Panc1 (cell line): ENCODE measurements at regions of chr6 and their contacts with region 1.

Region 1: DNA sequence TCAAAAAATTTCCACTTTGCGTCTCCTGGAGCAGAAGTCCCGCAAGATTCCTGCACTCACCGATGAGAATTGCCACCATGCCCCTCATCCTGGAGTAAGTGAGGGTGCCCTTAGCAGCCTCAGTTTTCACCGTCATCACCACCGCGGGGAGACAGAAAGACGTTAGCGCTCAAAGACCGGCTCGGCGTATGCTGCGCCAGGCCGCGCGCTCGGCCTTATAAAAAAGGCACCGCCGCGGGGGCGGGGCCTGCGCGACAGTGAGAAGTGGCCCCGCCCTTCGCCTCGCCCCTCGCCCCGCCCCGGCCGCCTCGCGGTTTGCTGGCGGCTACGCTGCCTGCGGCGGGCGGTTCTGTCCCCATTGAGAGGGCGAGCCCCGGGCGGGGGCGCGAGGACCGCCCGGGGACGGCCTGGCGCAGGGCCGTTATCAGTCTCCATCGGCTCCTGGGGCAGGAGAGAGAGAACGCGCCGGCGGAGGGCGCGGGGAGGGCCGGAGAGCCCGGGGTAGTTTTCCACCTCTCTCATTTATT is 122.3 kb upstream of the SLC2A12 start:
- DNase-seq: peak; percentile 59
- ATAC-seq: peak; percentile 81
- H3K4me3 ChIP-seq: peak overlapping the region; percentile 61 to 69
- H3K27ac ChIP-seq: peak overlapping the region; percentile 68
- H3K4me1 ChIP-seq: peaks cover 16% of the 10 kb centered on the region
- H3K27me3 ChIP-seq: no peaks in the 10 kb centered on the region; the same call in 1 of the 2 replicates
- CTCF ChIP-seq: no peak

Region 2: DNA sequence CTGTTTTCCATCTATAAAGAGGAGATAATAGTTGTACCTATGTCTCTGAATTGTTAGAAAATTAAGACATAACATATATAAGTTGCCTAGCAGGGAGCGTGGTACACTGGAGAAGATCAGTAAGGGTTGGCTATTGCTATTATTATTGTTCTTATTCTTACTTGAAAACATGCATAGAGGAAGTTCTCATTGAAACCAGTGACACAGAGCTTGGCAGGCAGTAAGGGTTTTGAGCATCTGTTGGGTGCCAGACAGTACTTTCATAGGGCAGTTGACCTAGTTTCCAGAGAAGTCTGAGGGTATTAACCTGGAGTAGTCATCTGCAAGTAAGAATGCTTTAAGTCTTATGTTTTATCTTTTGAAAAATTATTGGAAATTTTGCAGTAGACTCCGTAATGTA is 156.5 kb after region 1 on chr6:
- CTCF ChIA-PET with region 1: no interaction called
- POLR2A ChIA-PET with region 1: no interaction called
- in situ Hi-C with region 1: no loop called
- intact Hi-C with region 1: no loop called
- DNase-seq: no peak
- ATAC-seq: no peak
- H3K4me3 ChIP-seq: no peak overlapping the region
- H3K27ac ChIP-seq: no peak overlapping the region
- H3K4me1 ChIP-seq: no peaks in the 10 kb centered on the region
- H3K27me3 ChIP-seq: no peaks in the 10 kb centered on the region
- CTCF ChIP-seq: no peak

Region 3: DNA sequence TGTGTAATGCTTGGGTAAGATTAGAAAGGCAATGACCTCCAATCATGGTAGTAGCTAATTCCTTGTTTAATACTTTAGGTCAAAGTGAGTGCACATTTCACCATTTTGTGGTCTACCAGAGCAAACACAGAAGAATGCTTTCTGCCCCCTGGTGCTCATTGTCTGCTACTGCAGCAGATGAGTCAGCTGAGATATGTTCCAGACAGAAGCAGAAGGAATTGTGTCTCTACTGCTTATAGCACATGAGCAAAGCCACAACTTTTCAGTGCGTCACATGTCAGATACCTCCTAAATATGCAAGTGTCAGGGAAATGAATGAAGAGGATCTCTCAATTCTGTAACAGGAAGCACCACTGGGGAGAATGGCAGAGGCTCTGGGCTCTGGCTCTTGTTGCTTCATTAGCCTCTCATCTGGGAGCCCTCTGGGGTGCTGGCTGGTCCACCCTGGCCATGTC is 466.3 kb after region 1 on chr6:
- CTCF ChIA-PET with region 1: no interaction called
- POLR2A ChIA-PET with region 1: no interaction called
- in situ Hi-C with region 1: no loop called
- intact Hi-C with region 1: loop called (anchors 1 kb)
- DNase-seq: peak; percentile 70
- ATAC-seq: peak; percentile 78
- H3K4me3 ChIP-seq: no peak overlapping the region
- H3K27ac ChIP-seq: no peak overlapping the region
- H3K4me1 ChIP-seq: no peaks in the 10 kb centered on the region
- H3K27me3 ChIP-seq: no peaks in the 10 kb centered on the region
- CTCF ChIP-seq: peak; percentile 84

Region 4: GRCh38 chr6:134822920-134823709 is 648.4 kb after region 1 on chr6:
- CTCF ChIA-PET with region 1: interaction called, 4 read pairs
- POLR2A ChIA-PET with region 1: no interaction called
- in situ Hi-C with region 1: no loop called
- intact Hi-C with region 1: loop called (anchors 2 kb)
- DNase-seq: peak; percentile 85
- ATAC-seq: peak; percentile 100
- H3K4me3 ChIP-seq: no peak overlapping the region
- H3K27ac ChIP-seq: no peak overlapping the region
- H3K4me1 ChIP-seq: no peaks in the 10 kb centered on the region
- H3K27me3 ChIP-seq: no peaks in the 10 kb centered on the region
- CTCF ChIP-seq: peak; percentile 93

Region 5: DNA sequence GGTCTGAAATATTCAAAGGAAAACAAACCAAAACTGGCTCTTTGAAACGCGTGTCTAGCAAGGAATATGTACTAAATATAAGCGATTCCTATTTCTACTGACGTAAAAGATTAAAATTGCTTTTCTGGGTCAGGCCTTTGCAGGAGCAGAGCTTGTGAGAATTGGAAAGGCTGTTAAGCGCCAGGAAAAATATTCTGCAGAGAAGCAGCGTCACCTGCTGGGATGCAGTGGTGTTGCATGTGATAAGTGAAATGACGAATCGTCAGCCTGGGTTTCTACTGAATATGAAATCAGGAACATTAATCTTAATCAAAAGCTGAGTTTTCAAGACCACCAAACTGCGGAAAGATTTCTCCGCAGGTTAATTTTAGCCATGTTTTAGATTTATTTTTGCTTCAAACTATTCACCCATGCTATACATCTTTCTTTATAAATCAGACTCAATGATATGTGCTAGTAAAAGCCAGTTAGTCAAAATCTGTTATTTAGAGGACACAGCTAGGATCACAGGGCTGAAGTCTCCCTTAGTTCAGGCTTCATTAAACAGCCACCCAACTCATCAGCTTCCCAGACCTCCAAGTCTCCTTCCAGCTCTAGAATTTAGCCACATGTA is 707.8 kb after region 1 on chr6:
- CTCF ChIA-PET with region 1: no interaction called
- POLR2A ChIA-PET with region 1: no interaction called
- in situ Hi-C with region 1: no loop called
- intact Hi-C with region 1: loop called (anchors 1 kb)
- DNase-seq: peak; percentile 45
- ATAC-seq: peak; percentile 75
- H3K4me3 ChIP-seq: no peak overlapping the region
- H3K27ac ChIP-seq: no peak overlapping the region
- H3K4me1 ChIP-seq: no peaks in the 10 kb centered on the region
- H3K27me3 ChIP-seq: no peaks in the 10 kb centered on the region
- CTCF ChIP-seq: peak; percentile 95

Region 6: GRCh38 chr6:134938896-134939295 is 764.2 kb after region 1 on chr6:
- CTCF ChIA-PET with region 1: no interaction called
- POLR2A ChIA-PET with region 1: no interaction called
- in situ Hi-C with region 1: no loop called
- intact Hi-C with region 1: loop called (anchors 2 kb)
- DNase-seq: no peak
- ATAC-seq: no peak
- H3K4me3 ChIP-seq: no peak overlapping the region
- H3K27ac ChIP-seq: no peak overlapping the region
- H3K4me1 ChIP-seq: peaks cover 2% of the 10 kb centered on the region; the same call in 1 of the 2 replicates
- H3K27me3 ChIP-seq: no peaks in the 10 kb centered on the region
- CTCF ChIP-seq: no peak